ENCODE measurements at regions of chr5 and their contacts with region 1.

Region 1: GRCh38 chr5:93941897-93942296 is 200.5 kb upstream of the POU5F2 start:
- DNase-seq: no peak
- ATAC-seq: no peak
- H3K4me3 ChIP-seq: no peak overlapping the region
- H3K27ac ChIP-seq: no peak overlapping the region
- H3K4me1 ChIP-seq: no peaks in the 10 kb centered on the region
- H3K27me3 ChIP-seq: no peaks in the 10 kb centered on the region
- CTCF ChIP-seq: no peak

Region 2: DNA sequence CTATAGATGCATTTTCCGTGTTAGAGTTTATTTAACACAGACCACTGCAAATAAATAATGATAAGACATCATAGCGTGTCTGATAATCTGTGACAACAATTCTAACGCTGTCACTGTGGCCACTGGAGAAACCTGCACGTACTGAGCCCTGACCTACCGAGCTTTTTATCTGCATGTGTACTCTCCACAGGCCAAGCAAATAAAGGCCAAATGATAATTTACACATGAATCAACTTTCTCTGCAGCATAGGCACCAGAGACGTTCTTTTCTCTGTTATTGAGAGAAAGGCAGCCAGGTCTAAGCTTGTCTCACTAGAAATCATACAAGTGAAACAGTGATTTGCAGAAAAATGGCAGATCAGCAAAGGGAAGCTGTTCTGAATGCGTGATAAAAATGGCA is 276.2 kb before region 1 on chr5:
- CTCF ChIA-PET with region 1: no interaction called
- POLR2A ChIA-PET with region 1: interaction called, 14 read pairs
- intact Hi-C with region 1: no loop called
- DNase-seq: no peak
- ATAC-seq: no peak
- H3K4me3 ChIP-seq: no peak overlapping the region
- H3K27ac ChIP-seq: no peak overlapping the region
- H3K4me1 ChIP-seq: no peaks in the 10 kb centered on the region
- H3K27me3 ChIP-seq: no peaks in the 10 kb centered on the region
- CTCF ChIP-seq: no peak

Measured in PC-3 (cell line).